CD4-positive, alpha-beta memory T cell (primary cell): ENCODE measurements at regions of chr7 and their contacts with region 1.

Region 1: DNA sequence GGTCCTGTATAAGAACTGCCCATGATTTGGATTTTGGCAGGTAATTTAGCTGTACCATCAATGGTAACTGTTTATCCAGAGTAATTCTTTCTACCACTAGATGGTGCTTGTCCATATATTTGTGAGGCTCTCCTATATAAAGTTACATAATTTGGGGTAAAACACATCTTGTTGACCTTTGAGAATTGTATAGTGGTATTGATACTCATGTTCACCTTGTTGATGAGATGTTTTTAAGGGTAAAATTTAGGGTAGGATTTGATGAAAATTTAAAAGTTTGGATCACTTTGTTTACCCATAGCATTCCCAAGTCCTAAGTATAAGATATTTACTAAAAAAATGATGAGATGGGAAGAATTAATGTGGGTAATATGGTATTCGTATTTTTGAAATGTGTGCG is 31.6 kb downstream of the ST7 start:
- DNase-seq: peak in 4 of 5 donors; percentile 35 to 46 (median 39)
- H3K4me3 ChIP-seq: no peak overlapping the region
- H3K4me3 Mint-ChIP-seq: no peak overlapping the region
- H3K27ac ChIP-seq: no peak overlapping the region
- H3K27ac Mint-ChIP-seq: no peak overlapping the region
- H3K4me1 ChIP-seq: peaks cover 3% of the 10 kb centered on the region
- H3K4me1 Mint-ChIP-seq: no peaks in the 10 kb centered on the region
- H3K27me3 ChIP-seq: no peaks in the 10 kb centered on the region
- H3K27me3 Mint-ChIP-seq: no peaks in the 10 kb centered on the region

Region 2: DNA sequence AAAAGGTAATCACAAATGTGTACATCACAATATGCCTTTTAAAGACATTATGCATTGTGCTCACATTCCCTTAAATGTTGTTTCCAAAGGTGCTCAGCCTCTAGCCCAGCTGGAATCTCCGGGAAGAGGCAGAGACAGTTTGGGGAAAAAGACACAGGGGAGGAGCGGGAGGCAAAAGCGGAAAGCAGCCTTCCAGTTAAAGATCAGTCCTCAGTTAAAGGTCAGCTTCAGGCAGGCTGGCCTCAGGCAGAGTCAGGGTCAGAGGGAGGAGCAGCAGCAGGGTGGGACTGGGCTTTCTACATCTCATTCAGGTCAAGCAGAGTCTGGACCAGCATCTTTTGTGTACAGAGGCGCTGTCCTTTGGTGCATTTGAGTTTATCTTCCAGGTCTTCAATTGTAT is 13.0 kb before region 1 on chr7:
- CTCF ChIA-PET with region 1: interaction called, 4 read pairs
- POLR2A ChIA-PET with region 1: no interaction called
- intact Hi-C with region 1: loop called (anchors 1 kb)
- DNase-seq: no peak
- H3K4me3 ChIP-seq: no peak overlapping the region
- H3K4me3 Mint-ChIP-seq: no peak overlapping the region
- H3K27ac ChIP-seq: no peak overlapping the region
- H3K27ac Mint-ChIP-seq: no peak overlapping the region
- H3K4me1 ChIP-seq: no peaks in the 10 kb centered on the region
- H3K4me1 Mint-ChIP-seq: peaks cover 0 to 2% (median 0%) of the 10 kb centered on the region in 4 donors
- H3K27me3 ChIP-seq: no peaks in the 10 kb centered on the region
- H3K27me3 Mint-ChIP-seq: peaks cover 0 to 1% of the 10 kb centered on the region in 2 donors

Region 3: GRCh38 chr7:117110480-117111337 is 125.8 kb after region 1 on chr7:
- CTCF ChIA-PET with region 1: interaction called, 406 read pairs
- POLR2A ChIA-PET with region 1: no interaction called
- intact Hi-C with region 1: no loop called
- DNase-seq: peak; percentile 49 to 73 (median 57)
- H3K4me3 ChIP-seq: no peak overlapping the region
- H3K4me3 Mint-ChIP-seq: peak overlapping the region in 7 of 8 donors; percentile 33 to 74 (median 53)
- H3K27ac ChIP-seq: peak overlapping the region; percentile 52
- H3K27ac Mint-ChIP-seq: peak overlapping the region; percentile 76 to 91 (median 84)
- H3K4me1 ChIP-seq: peaks cover 20% of the 10 kb centered on the region
- H3K4me1 Mint-ChIP-seq: peaks cover 11 to 25% (median 21%) of the 10 kb centered on the region in 4 donors
- H3K27me3 ChIP-seq: no peaks in the 10 kb centered on the region
- H3K27me3 Mint-ChIP-seq: no peaks in the 10 kb centered on the region

Region 4: DNA sequence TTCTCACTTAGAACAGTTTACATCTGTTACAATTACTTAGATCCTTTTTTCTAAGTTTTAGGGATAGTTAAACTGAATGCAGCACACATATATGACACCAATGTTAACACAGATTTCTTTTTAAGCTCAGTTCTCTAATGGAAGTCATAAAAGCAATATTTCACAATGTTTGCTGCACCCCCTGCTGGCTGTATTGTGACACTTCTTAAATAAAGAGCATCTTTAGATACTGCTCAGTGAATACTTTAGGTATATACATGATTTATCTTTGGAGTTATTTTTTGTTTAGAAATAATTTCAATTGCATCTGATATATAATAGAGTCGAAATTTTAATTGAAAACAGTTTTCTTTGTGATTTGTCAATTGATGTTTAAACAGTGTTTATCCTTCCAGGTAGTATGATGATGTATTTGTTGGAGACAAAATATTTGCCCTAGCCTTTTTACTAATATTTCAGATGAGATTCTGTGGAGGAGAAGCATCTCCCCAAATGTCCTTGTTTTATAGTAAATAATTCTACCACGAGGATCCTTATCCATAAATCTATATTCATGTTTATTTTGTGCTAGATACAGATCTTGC is 142.8 kb after region 1 on chr7:
- CTCF ChIA-PET with region 1: interaction called, 406 read pairs
- POLR2A ChIA-PET with region 1: no interaction called
- intact Hi-C with region 1: loop called (anchors 1 kb)
- DNase-seq: peak in 4 of 5 donors; percentile 34 to 47 (median 44)
- H3K4me3 ChIP-seq: no peak overlapping the region
- H3K4me3 Mint-ChIP-seq: no peak overlapping the region
- H3K27ac ChIP-seq: no peak overlapping the region
- H3K27ac Mint-ChIP-seq: no peak overlapping the region
- H3K4me1 ChIP-seq: no peaks in the 10 kb centered on the region
- H3K4me1 Mint-ChIP-seq: peaks cover 0 to 4% (median 2%) of the 10 kb centered on the region in 4 donors
- H3K27me3 ChIP-seq: no peaks in the 10 kb centered on the region
- H3K27me3 Mint-ChIP-seq: no peaks in the 10 kb centered on the region

Region 5: DNA sequence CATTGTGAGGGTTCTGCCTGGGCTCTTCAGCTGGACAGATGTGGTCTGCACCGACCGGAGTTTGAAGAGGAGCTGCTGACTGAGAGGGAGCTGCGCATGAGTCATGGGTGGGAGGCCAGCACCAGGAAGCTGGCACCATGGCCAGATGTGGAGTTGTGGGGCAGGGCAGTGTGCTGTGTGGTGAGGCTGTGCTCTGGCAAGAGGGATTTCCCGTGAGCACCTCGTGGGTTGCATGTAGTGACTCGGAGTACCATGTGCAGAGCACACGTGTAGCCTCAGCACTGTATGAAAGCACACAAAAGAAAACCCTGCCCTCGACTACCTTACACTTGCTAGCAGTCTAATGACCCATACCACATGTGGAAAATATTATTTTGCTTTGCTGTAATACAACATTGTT is 234.6 kb after region 1 on chr7:
- CTCF ChIA-PET with region 1: no interaction called
- POLR2A ChIA-PET with region 1: no interaction called
- intact Hi-C with region 1: no loop called
- DNase-seq: no peak
- H3K4me3 ChIP-seq: no peak overlapping the region
- H3K4me3 Mint-ChIP-seq: no peak overlapping the region
- H3K27ac ChIP-seq: no peak overlapping the region
- H3K27ac Mint-ChIP-seq: no peak overlapping the region
- H3K4me1 ChIP-seq: no peaks in the 10 kb centered on the region
- H3K4me1 Mint-ChIP-seq: no peaks in the 10 kb centered on the region
- H3K27me3 ChIP-seq: no peaks in the 10 kb centered on the region
- H3K27me3 Mint-ChIP-seq: no peaks in the 10 kb centered on the region